HCT116 (cell line): ENCODE measurements at regions of chr5 and their contacts with region 1.

Region 1: DNA sequence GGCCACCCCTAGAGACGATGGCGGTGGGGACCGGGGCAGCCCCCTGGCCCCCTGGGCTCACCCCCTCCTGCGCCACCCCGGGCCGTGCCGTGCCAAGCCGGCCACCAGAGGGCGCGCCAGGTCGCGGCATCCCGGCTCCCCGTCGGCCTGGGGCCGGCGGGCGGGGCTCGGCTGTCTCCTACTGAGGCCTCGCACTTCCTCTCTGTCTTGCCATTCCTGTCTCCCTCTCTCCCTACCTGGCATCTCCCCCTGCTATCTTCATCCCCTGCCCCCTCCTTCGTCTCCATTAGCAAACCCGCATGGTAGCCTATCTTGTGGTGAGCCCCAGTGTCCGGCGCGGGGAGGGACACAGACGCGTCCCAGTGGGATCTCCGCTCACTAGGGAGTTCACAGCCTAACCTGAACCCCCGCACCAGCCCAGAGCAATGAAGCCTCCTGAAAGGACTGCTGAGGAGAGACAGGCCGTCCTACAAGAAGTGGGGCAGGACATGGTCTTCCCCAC is 29.8 kb upstream of the FABP6 start:
- DNase-seq: no peak
- ATAC-seq: peak; percentile 98
- H3K4me3 ChIP-seq: peak overlapping the region; percentile 28 to 40
- H3K27ac ChIP-seq: no peak overlapping the region
- H3K4me1 ChIP-seq: peaks cover 0 to 9% of the 10 kb centered on the region in 2 experiments; a peak in 2 of 4 replicates
- H3K27me3 ChIP-seq: no peaks in the 10 kb centered on the region
- CTCF ChIP-seq: peak; percentile 53 to 91 (median 74); a peak in 5 of 6 replicates
- POLR2A ChIP-seq: no peak
- RAD21 ChIP-seq: peak; percentile 84

Region 2: DNA sequence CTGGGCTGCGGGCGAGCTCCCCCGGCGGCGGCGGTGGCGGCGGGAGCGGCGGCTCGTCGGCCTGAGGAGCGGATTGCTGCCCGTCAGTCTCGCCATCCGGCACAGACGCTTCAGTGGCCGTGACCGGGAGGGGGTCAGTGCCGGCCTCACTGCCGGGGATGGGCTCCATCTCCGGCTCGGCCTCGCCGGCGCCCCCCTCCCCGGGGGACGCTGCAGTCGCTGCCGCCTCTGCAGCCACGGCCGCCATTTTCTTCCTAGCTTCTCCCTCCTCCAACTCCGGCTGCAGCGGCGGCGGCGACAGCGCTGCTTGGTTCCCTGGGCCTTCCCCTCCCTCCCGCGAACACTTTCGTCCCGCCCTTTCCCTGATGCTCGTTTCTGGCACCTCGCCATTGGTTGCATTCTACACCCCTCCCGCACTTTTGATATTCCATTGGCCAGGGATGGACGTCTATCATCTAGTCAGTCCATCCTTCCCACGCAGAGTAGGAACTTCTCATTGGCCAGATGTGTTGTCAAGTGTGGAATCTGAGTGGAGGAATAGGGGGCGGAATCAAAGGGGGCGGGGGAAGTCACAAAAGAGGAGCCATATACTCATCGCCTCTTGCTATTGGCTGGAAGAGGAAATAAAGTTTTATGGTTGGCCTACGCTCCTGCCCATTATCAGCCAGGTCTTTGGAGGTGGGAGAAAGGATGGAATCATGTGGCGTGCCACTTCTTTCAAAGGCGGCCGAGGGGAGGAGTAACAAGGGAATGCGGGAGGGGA is 80.1 kb before region 1 on chr5 and contains the start of gene PWWP2A:
- CTCF ChIA-PET with region 1: no interaction called
- POLR2A ChIA-PET with region 1: no interaction called
- RAD21 ChIA-PET with region 1: no interaction called
- intact Hi-C with region 1: loop called (anchors 2 kb)
- DNase-seq: peak; percentile 100
- ATAC-seq: peak; percentile 92
- H3K4me3 ChIP-seq: peak within 1 kb of the TSS; percentile 70 to 88
- H3K27ac ChIP-seq: peak within 1 kb of the TSS; percentile 79
- H3K4me1 ChIP-seq: peaks cover 4 to 7% of the 10 kb centered on the region in 2 experiments; a peak in 2 of 4 replicates
- H3K27me3 ChIP-seq: no peaks in the 10 kb centered on the region
- CTCF ChIP-seq: no peak
- POLR2A ChIP-seq: peak; percentile 81
- RAD21 ChIP-seq: no peak
- total RNA-seq, gene PWWP2A: 14.7 TPM

Region 3: GRCh38 chr5:160303690-160304089 is 104.2 kb after region 1 on chr5:
- CTCF ChIA-PET with region 1: no interaction called
- POLR2A ChIA-PET with region 1: no interaction called
- RAD21 ChIA-PET with region 1: no interaction called
- intact Hi-C with region 1: no loop called
- DNase-seq: no peak
- ATAC-seq: no peak
- H3K4me3 ChIP-seq: no peak overlapping the region
- H3K27ac ChIP-seq: no peak overlapping the region
- H3K4me1 ChIP-seq: 0 out of 4 replicates have a peak, but pooled peaks cover 0 to 4% of the 10 kb centered on the region in 2 experiments
- H3K27me3 ChIP-seq: no peaks in the 10 kb centered on the region
- CTCF ChIP-seq: no peak
- POLR2A ChIP-seq: no peak
- RAD21 ChIP-seq: no peak

Region 4: DNA sequence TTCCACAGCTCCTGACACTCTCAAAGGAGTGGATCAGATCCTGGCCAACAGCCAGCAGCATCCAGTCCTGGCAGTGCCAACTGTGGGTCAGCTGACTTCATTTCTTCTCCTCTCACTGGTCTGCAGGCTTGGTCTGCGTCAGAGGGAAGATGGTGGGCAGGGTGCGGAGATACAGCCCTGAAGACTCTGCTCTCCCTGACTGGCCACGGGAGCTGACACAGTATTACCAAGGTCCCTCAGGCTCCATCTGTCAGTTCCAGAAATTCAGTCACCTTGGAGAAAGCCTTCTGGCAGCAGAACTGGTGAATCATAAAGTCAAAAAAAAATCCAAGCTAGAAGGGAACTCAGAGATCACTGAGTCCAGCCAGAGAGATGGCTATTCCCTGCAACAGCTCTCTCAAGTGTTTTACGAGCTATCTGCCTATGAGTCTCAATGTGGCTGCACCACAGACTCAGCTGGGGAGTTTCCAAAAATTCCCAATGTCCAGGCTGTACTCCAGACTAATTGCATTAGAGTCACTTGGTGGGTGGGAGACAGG is 143.0 kb after region 1 on chr5:
- CTCF ChIA-PET with region 1: interaction called, 9 read pairs
- POLR2A ChIA-PET with region 1: no interaction called
- RAD21 ChIA-PET with region 1: interaction called, 3 to 4 read pairs
- intact Hi-C with region 1: loop called (anchors 1 kb)
- DNase-seq: no peak
- ATAC-seq: no peak
- H3K4me3 ChIP-seq: no peak overlapping the region
- H3K27ac ChIP-seq: no peak overlapping the region
- H3K4me1 ChIP-seq: peaks cover 0 to 7% of the 10 kb centered on the region in 2 experiments; a peak in 2 of 4 replicates
- H3K27me3 ChIP-seq: no peaks in the 10 kb centered on the region
- CTCF ChIP-seq: no peak
- POLR2A ChIP-seq: no peak
- RAD21 ChIP-seq: no peak

Region 5: GRCh38 chr5:160390787-160391696 is 191.6 kb after region 1 on chr5:
- CTCF ChIA-PET with region 1: interaction called, 4 read pairs
- POLR2A ChIA-PET with region 1: no interaction called
- RAD21 ChIA-PET with region 1: no interaction called
- intact Hi-C with region 1: loop called (anchors 1 kb)
- DNase-seq: no peak
- ATAC-seq: peak; percentile 52; the same call in 1 of the 2 replicates
- H3K4me3 ChIP-seq: no peak overlapping the region
- H3K27ac ChIP-seq: no peak overlapping the region
- H3K4me1 ChIP-seq: no peaks in the 10 kb centered on the region
- H3K27me3 ChIP-seq: no peaks in the 10 kb centered on the region
- CTCF ChIP-seq: peak; percentile 24 to 68 (median 53); a peak in 4 of 6 replicates
- POLR2A ChIP-seq: no peak
- RAD21 ChIP-seq: peak; percentile 76